ENCODE measurements at regions of chr1 and their contacts with region 1.

Region 1: DNA sequence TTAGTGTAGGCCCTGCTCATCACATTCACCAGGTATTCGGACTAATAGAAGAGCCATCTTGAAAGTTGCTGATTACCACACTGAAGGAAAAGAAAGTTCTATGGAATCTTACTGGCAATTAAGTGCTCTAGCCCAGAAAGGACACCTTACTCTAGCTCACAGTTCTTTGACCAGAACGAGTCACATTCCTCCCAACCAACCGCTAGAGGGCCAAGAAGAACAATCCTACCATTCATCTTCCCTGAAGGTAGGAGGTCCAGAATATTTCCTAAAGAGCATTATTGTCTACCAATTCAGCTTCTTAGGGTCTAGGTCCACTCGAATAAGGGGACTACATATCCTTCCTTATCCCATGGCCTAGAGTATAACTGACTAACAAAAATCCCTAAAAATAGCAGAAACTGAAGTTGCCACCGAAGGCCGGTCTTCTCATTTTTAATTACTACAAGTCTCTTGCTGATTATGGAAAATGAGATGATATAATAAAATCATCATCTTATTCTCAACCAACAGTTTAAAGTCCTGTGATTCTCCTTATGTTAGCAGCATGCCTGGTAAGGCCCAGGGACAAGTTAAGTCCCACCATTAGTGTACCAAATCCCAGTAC is 2.7 kb upstream of the FMO1 start:
- DNase-seq: peak; percentile 45
- ATAC-seq: peak; percentile 93
- H3K4me3 ChIP-seq: no peak overlapping the region
- H3K27ac ChIP-seq: no peak overlapping the region
- H3K4me1 ChIP-seq: no peaks in the 10 kb centered on the region
- H3K27me3 ChIP-seq: no peaks in the 10 kb centered on the region
- CTCF ChIP-seq: peak; percentile 66 to 88 (median 82)
- POLR2A ChIP-seq: no peak
- RAD21 ChIP-seq: peak; percentile 64

Region 2: DNA sequence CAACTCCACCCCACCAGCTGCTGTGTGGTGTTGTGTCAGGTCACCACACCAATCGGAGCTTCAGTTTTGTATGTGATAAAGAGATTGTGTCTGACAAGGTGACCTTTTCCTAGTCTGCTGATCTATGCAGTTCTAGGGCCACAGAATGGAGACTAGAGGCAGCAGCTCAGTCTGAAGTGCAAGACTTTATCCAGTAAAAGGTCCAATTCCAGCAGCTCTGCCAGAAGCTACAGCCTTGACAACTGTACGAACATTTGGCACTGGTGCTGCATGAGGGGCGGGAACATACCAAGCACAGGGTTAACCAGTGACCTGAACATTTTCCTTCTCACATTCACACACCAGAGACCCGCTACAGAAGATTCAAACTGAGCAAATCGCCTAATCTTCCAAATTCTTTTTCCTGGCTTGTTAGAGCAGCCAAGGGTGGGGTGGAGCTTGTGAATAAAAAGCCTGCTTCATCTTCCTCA is 12.1 kb after region 1 on chr1:
- CTCF ChIA-PET with region 1: interaction called, 11 read pairs
- POLR2A ChIA-PET with region 1: no interaction called
- RAD21 ChIA-PET with region 1: no interaction called
- intact Hi-C with region 1: no loop called
- DNase-seq: no peak
- ATAC-seq: no peak
- H3K4me3 ChIP-seq: no peak overlapping the region
- H3K27ac ChIP-seq: no peak overlapping the region
- H3K4me1 ChIP-seq: no peaks in the 10 kb centered on the region; a peak in 1 of 4 replicates
- H3K27me3 ChIP-seq: no peaks in the 10 kb centered on the region
- CTCF ChIP-seq: no peak
- POLR2A ChIP-seq: no peak
- RAD21 ChIP-seq: no peak

Region 3: GRCh38 chr1:171403371-171403770 is 157.8 kb after region 1 on chr1:
- CTCF ChIA-PET with region 1: no interaction called
- POLR2A ChIA-PET with region 1: no interaction called
- RAD21 ChIA-PET with region 1: no interaction called
- intact Hi-C with region 1: loop called (anchors 10 kb)
- DNase-seq: no peak
- ATAC-seq: no peak
- H3K4me3 ChIP-seq: no peak overlapping the region
- H3K27ac ChIP-seq: no peak overlapping the region
- H3K4me1 ChIP-seq: peaks cover 0 to 7% of the 10 kb centered on the region in 2 experiments; a peak in 1 of 4 replicates
- H3K27me3 ChIP-seq: no peaks in the 10 kb centered on the region
- CTCF ChIP-seq: no peak
- POLR2A ChIP-seq: no peak
- RAD21 ChIP-seq: no peak

Region 4: GRCh38 chr1:171715813-171716251 is 470.3 kb after region 1 on chr1:
- CTCF ChIA-PET with region 1: no interaction called
- POLR2A ChIA-PET with region 1: no interaction called
- RAD21 ChIA-PET with region 1: no interaction called
- intact Hi-C with region 1: loop called (anchors 10 kb)
- DNase-seq: no peak
- ATAC-seq: peak; percentile 49
- H3K4me3 ChIP-seq: no peak overlapping the region
- H3K27ac ChIP-seq: no peak overlapping the region
- H3K4me1 ChIP-seq: no peaks in the 10 kb centered on the region
- H3K27me3 ChIP-seq: no peaks in the 10 kb centered on the region
- CTCF ChIP-seq: peak; percentile 23 to 53 (median 50); a peak in 4 of 6 replicates
- POLR2A ChIP-seq: no peak
- RAD21 ChIP-seq: peak; percentile 60

Measured in HCT116 (cell line).